Thyroid gland (tissue), 4 donors: ENCODE measurements at regions of chr1 and their contacts with region 1.

Region 1: DNA sequence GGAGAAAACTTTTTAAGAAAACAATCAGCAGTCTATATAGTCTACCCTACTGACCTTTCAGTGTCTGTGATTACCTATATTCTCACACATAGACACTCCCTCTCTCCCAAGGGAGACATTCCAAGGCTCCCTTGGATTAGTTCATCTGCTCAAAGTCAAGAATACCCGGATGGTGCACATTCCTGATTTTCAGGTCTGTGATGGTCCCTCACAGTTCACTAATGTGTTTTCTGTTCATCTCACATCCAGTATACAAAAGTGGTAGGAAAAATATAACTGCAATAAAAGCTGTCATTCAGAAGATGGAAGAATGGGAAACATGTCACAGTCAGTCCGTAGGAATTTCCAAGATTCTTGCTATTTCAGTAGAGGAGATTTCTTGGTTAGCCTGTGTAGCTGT is 224.1 kb upstream of the CACYBP start:
- DNase-seq: no peak
- H3K4me3 ChIP-seq: no peak overlapping the region
- H3K27ac ChIP-seq: no peak overlapping the region
- H3K4me1 ChIP-seq: no peaks in the 10 kb centered on the region
- H3K27me3 ChIP-seq: no peaks in the 10 kb centered on the region
- CTCF ChIP-seq: no peak
- POLR2A ChIP-seq: no peak

Region 2: DNA sequence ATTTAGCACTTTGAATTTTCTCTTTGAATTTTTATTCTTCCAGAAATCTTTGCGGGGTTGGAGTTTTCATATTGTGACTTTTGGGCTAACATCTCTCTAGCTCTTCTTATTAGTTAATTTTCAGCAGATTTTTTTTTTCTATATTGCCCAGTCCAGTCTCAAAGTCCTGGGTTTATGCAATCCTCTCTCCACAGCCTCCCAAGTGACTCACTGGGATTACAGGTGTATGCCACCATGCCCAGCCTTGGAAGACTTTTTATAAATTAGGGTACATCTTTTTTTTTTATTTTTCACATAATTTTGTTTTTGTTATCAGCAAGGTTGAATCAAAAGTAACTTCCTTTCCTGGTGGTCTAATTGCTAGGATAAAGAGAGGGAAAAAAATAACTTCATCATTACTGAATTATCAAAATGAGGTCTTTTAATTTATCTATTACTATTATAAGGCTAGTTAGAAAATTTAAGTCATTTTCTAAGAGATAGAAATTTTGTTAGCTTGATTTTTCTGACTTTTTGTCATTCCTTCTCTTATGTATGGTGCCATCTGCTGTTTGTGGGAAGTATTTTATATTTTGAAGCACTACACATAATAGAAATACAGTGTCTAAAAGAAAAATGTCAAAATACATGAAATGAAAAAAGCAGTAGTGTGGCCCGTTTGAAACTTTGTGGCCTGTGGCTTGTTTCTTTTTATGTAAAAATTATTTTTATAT is 49.3 kb before region 1 on chr1:
- intact Hi-C with region 1: no loop called
- DNase-seq: no peak
- H3K4me3 ChIP-seq: no peak overlapping the region
- H3K27ac ChIP-seq: no peak overlapping the region
- H3K4me1 ChIP-seq: no peaks in the 10 kb centered on the region
- H3K27me3 ChIP-seq: no peaks in the 10 kb centered on the region
- CTCF ChIP-seq: peak in 3 of 6 experiments; percentile 36 to 56 (median 36)
- POLR2A ChIP-seq: no peak

Region 3: DNA sequence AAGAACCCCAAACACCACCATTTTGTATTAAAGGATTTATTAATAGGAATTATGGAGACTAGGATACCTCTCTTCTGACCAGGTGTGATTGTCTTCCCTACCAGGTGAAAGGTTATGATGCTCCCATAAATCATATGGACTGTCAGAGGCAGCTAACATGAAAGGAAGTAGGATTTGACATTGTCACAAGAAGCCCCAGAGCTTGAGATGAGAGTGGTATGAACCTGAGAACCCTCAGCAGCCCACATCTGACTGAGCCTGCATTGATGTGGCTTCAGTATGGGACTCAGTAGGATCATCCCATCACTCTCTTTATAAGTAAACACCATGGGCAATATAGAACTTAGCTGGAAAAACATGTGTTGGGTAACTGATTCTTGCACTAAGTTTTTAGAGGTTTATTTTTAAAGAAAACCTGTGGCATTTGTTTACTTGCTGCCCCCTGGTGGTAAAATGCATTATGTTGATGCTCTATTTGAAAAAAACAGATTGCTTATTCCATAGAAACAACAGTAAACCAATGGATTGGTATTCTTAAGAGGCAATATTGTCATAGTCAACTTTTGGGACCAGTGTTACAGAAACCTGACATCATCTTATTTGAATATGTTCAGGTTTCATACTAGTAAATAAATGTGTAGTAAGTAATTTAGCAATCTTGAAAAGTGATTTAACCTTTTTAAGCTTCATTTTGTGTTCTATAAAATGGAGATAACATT is 207.5 kb after region 1 on chr1:
- intact Hi-C with region 1: loop called (anchors 5 kb)
- DNase-seq: no peak
- H3K4me3 ChIP-seq: no peak overlapping the region
- H3K27ac ChIP-seq: no peak overlapping the region
- H3K4me1 ChIP-seq: no peaks in the 10 kb centered on the region
- H3K27me3 ChIP-seq: no peaks in the 10 kb centered on the region
- CTCF ChIP-seq: peak; percentile 8 to 58 (median 38)
- POLR2A ChIP-seq: no peak